ENCODE measurements at regions of chr10 and their contacts with region 1.

Region 1: DNA sequence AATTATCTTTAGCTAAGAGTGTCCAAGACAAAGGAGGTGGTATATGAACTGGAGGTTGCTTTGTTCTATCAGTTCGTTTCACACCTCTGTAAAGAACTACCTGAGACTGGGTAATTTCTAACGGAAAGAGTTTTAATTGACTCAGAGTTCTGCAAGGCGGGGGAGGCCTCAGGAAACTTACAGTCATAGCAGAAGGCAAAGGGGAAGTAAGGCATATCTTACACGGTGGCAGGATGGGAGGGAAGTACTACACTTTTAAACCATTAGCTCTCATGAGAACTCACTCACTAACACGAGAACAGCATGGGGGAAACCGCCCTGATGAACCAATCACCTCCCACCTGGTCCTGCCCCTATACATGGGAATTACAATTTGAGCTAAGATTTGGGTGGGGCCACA is 1202.3 kb upstream of the LRRTM3 start:
- DNase-seq: no peak
- H3K4me3 Mint-ChIP-seq: no peak overlapping the region
- H3K27ac Mint-ChIP-seq: no peak overlapping the region
- H3K4me1 Mint-ChIP-seq: no peaks in the 10 kb centered on the region
- H3K27me3 Mint-ChIP-seq: no peaks in the 10 kb centered on the region

Region 2: DNA sequence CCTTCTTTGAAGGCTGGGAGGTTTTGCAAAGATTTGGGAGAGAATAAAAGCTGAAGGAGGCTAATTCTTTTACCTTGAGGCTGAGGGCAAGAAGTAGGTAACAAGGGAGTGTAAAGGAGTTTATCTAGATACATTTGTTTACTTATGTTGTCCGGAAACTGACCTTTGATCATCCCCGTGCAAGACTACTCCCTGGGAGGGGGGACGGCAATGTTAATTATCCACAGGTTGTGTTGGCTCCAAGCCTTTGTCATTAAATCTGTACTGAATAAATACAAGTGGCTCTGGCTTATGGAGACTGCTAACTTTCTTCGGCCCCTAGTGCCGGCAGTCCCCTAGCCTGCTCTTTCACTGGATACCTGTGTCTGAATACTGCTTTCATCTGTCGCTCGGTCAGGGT is 48.3 kb before region 1 on chr10:
- CTCF ChIA-PET with region 1: no interaction called
- intact Hi-C with region 1: loop called (anchors 1 kb)
- DNase-seq: no peak
- H3K4me3 Mint-ChIP-seq: no peak overlapping the region
- H3K27ac Mint-ChIP-seq: no peak overlapping the region
- H3K4me1 Mint-ChIP-seq: no peaks in the 10 kb centered on the region
- H3K27me3 Mint-ChIP-seq: no peaks in the 10 kb centered on the region

Region 3: DNA sequence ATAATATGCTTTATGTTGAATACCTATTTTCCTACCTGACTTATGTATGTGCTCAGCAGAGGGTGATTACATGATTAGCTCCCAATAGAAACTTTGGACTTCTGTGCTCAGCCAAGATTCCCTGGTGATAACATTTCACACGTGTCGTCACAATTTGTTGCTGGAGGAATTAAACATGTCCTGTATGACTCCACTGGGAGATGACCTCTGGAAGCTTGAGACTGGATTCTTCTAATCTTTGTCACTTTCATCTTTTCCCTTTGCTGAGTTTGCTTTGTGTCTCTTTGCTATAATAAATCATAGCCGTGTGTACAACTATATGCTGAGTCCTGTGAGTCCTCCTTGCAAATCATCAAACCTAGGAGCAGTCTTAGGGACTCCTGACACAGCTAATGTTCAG is 1081.4 kb after region 1 on chr10:
- CTCF ChIA-PET with region 1: no interaction called
- intact Hi-C with region 1: no loop called
- DNase-seq: no peak
- H3K4me3 Mint-ChIP-seq: no peak overlapping the region
- H3K27ac Mint-ChIP-seq: no peak overlapping the region
- H3K4me1 Mint-ChIP-seq: no peaks in the 10 kb centered on the region
- H3K27me3 Mint-ChIP-seq: no peaks in the 10 kb centered on the region

Measured in activated naive CD4-positive, alpha-beta T cell treated with anti-CD3 and anti-CD28 coated beads for 36 hours (primary cell).